CD8-positive, alpha-beta T cell (primary cell): ENCODE measurements at regions of chr6 and their contacts with region 1.

Region 1: DNA sequence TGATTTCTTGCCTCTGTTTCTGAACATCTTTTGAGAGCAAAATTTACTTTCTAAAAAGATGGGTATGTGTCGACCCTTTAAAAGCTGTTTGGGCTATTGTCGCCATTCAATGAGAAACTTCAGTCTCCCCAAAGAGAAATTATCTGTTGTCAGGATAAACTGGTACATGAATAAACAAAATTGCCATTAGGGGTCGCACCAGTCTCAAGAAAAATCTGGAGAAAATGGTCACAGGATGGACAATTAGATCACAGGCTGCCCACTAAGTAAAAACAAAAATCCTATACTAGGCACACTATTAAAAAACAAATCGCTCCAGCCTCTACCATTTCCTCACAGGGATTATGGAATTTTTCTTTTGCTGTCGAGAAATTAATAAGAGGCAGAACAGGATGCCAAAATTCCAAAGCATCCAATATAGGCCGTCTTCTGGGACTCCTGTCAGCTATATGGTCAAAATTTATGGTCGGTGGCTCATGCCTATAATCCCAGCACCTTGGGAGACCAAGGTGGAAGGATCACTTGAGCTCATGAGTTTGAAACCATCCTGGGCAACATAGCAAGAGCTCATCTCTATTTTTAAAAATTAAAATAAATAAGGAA is 5.5 kb upstream of the HLA-E start:
- DNase-seq: peak in 3 of 9 experiments; percentile 45 to 76 (median 68)
- ATAC-seq: no peak
- H3K4me3 ChIP-seq: no peak overlapping the region
- H3K4me3 Mint-ChIP-seq: no peak overlapping the region
- H3K27ac ChIP-seq: no peak overlapping the region
- H3K27ac Mint-ChIP-seq: no peak overlapping the region
- H3K4me1 ChIP-seq: peaks cover 21% of the 10 kb centered on the region
- H3K4me1 Mint-ChIP-seq: peaks cover 34% of the 10 kb centered on the region
- H3K27me3 ChIP-seq: peaks cover 10 to 19% of the 10 kb centered on the region in 2 experiments
- H3K27me3 Mint-ChIP-seq: peaks cover 27% of the 10 kb centered on the region
- CTCF ChIP-seq: peak; percentile 91

Region 2: DNA sequence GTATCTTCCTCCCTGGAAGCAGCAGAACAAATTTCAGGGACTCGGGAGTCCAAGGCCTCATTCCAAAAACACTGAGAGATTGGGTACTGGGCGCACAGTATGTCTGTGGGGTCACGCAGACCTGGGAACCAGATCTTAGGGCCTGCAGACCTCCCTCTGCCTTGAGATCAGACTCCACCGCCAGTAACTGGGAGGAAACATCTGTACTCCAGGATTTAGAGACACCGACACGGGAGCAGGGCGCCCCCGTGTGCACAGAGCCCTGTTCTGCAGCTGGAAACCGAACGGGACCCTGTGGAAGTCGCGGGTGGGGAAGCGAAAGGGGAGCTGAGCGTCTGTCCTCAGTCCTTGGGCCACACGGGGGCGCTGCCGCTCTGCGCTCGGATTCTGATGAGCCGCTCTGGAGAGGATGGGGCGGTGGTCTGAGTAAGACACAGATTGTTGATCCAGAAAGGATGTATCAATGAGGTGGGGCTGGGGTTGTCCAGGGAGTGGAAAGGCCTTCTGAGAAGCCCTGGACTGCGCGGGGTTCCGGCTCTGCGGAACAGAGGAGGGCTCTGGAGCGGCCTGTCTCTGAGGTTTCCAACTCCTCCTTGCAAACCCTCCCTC is 30.2 kb before region 1 on chr6:
- CTCF ChIA-PET with region 1: interaction called, 71 read pairs
- POLR2A ChIA-PET with region 1: interaction called, 4 read pairs
- intact Hi-C with region 1: loop called (anchors 1 to 2 kb)
- DNase-seq: peak; percentile 71 to 93 (median 87)
- ATAC-seq: peak; percentile 83
- H3K4me3 ChIP-seq: peak overlapping the region in 1 of 2 experiments; percentile 41
- H3K4me3 Mint-ChIP-seq: peak overlapping the region; percentile 49
- H3K27ac ChIP-seq: no peak overlapping the region
- H3K27ac Mint-ChIP-seq: no peak overlapping the region
- H3K4me1 ChIP-seq: peaks cover 42% of the 10 kb centered on the region
- H3K4me1 Mint-ChIP-seq: peaks cover 41% of the 10 kb centered on the region
- H3K27me3 ChIP-seq: peaks cover 38 to 64% of the 10 kb centered on the region in 2 experiments
- H3K27me3 Mint-ChIP-seq: peaks cover 68% of the 10 kb centered on the region
- CTCF ChIP-seq: peak; percentile 63

Region 3: DNA sequence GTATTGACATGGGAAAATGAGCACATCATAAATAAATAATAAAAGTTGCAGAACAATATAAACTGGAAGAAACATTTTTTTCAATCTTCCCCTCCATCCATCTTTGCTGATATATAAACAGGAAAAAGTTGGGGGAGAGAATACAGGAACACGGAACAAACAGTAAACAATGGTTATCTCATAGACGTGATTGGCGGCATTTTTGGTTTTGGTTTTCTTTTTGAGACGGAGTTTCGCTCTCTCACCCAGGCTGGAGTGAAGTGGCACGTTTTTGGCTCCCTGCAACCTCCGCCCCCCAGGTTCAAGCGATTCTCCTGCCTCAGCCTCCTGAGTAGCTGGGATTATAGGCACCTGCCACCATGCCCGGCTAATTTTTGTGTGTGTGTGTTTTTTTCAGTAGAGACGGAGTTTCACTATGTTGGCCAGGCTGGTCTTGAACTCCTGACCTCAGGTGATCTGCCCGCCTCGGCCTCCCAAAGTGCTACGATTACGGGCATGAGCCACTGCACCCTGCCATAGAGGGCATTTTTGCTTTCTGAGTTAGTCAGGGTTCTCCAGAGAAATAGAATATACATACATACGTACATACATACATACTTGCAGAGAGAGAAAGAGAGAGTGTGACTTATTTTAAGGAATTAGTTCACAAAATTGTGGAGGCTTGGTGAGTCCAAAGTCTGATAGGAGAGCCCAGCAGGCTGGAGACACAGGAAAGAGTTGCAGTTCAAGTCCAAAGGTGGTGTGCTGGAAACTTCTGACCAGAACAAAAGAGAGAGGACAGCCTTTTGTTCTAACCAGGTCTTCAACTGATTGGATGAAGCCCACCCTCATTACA is 49.9 kb after region 1 on chr6:
- CTCF ChIA-PET with region 1: interaction called, 437 read pairs
- POLR2A ChIA-PET with region 1: interaction called, 14 read pairs
- intact Hi-C with region 1: loop called (anchors 1 kb)
- DNase-seq: peak in 2 of 9 experiments; percentile 50 to 71
- ATAC-seq: no peak
- H3K4me3 ChIP-seq: peak overlapping the region in 1 of 2 experiments; percentile 28
- H3K4me3 Mint-ChIP-seq: peak overlapping the region; percentile 65
- H3K27ac ChIP-seq: peak overlapping the region in 1 of 2 experiments; percentile 44
- H3K27ac Mint-ChIP-seq: peak overlapping the region; percentile 57
- H3K4me1 ChIP-seq: peaks cover 15% of the 10 kb centered on the region
- H3K4me1 Mint-ChIP-seq: peaks cover 33% of the 10 kb centered on the region
- H3K27me3 ChIP-seq: no peaks in the 10 kb centered on the region
- H3K27me3 Mint-ChIP-seq: no peaks in the 10 kb centered on the region
- CTCF ChIP-seq: no peak

Region 4: GRCh38 chr6:30578051-30578450 is 94.3 kb after region 1 on chr6:
- CTCF ChIA-PET with region 1: interaction called, 12 read pairs
- POLR2A ChIA-PET with region 1: no interaction called
- intact Hi-C with region 1: no loop called
- DNase-seq: no peak
- ATAC-seq: no peak
- H3K4me3 ChIP-seq: no peak overlapping the region
- H3K4me3 Mint-ChIP-seq: no peak overlapping the region
- H3K27ac ChIP-seq: no peak overlapping the region
- H3K27ac Mint-ChIP-seq: no peak overlapping the region
- H3K4me1 ChIP-seq: peaks cover 26% of the 10 kb centered on the region
- H3K4me1 Mint-ChIP-seq: peaks cover 30% of the 10 kb centered on the region
- H3K27me3 ChIP-seq: no peaks in the 10 kb centered on the region
- H3K27me3 Mint-ChIP-seq: no peaks in the 10 kb centered on the region
- CTCF ChIP-seq: no peak

Region 5: DNA sequence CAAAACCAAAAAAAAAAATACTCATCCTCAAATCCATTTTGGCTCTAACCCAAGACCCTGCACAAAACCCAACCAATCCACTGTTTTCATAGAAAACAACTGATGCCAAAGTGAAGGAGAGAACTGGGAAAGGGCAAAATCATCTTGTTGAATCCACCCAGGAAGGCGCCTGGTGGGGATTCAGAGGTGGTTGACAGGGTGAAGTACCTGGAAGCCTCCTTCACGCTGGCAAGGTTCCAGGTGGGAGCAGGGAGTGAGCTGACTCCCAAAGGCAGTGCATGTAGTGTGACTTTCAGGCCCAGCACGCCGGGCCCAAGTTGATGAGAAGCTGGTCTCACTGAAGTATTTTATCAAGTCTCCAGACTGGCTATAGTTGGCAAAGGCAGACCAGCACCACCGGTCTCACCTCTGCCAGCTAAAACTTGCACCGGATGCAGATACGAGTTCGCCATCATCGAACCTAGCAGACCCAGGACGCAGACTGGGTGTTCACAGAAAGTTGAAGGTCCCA is 116.7 kb after region 1 on chr6:
- CTCF ChIA-PET with region 1: interaction called, 189 read pairs
- POLR2A ChIA-PET with region 1: interaction called, 7 read pairs
- intact Hi-C with region 1: loop called (anchors 1 kb)
- DNase-seq: no peak
- ATAC-seq: no peak
- H3K4me3 ChIP-seq: no peak overlapping the region
- H3K4me3 Mint-ChIP-seq: no peak overlapping the region
- H3K27ac ChIP-seq: peak overlapping the region in 1 of 2 experiments; percentile 67
- H3K27ac Mint-ChIP-seq: no peak overlapping the region
- H3K4me1 ChIP-seq: peaks cover 15% of the 10 kb centered on the region
- H3K4me1 Mint-ChIP-seq: peaks cover 22% of the 10 kb centered on the region
- H3K27me3 ChIP-seq: no peaks in the 10 kb centered on the region
- H3K27me3 Mint-ChIP-seq: no peaks in the 10 kb centered on the region
- CTCF ChIP-seq: no peak

Region 6: GRCh38 chr6:30678964-30679726 is 195.4 kb after region 1 on chr6:
- CTCF ChIA-PET with region 1: interaction called, 23 read pairs
- POLR2A ChIA-PET with region 1: interaction called, 5 read pairs
- intact Hi-C with region 1: loop called in 1 of 2 experiments (anchors 2 kb)
- DNase-seq: peak; percentile 88 to 98 (median 92)
- ATAC-seq: peak; percentile 32
- H3K4me3 ChIP-seq: peak overlapping the region; percentile 86 to 95
- H3K4me3 Mint-ChIP-seq: peak overlapping the region; percentile 99
- H3K27ac ChIP-seq: peak overlapping the region; percentile 21 to 85
- H3K27ac Mint-ChIP-seq: peak overlapping the region; percentile 99
- H3K4me1 ChIP-seq: peaks cover 27% of the 10 kb centered on the region
- H3K4me1 Mint-ChIP-seq: peaks cover 38% of the 10 kb centered on the region
- H3K27me3 ChIP-seq: no peaks in the 10 kb centered on the region
- H3K27me3 Mint-ChIP-seq: no peaks in the 10 kb centered on the region
- CTCF ChIP-seq: peak; percentile 92

Region 7: DNA sequence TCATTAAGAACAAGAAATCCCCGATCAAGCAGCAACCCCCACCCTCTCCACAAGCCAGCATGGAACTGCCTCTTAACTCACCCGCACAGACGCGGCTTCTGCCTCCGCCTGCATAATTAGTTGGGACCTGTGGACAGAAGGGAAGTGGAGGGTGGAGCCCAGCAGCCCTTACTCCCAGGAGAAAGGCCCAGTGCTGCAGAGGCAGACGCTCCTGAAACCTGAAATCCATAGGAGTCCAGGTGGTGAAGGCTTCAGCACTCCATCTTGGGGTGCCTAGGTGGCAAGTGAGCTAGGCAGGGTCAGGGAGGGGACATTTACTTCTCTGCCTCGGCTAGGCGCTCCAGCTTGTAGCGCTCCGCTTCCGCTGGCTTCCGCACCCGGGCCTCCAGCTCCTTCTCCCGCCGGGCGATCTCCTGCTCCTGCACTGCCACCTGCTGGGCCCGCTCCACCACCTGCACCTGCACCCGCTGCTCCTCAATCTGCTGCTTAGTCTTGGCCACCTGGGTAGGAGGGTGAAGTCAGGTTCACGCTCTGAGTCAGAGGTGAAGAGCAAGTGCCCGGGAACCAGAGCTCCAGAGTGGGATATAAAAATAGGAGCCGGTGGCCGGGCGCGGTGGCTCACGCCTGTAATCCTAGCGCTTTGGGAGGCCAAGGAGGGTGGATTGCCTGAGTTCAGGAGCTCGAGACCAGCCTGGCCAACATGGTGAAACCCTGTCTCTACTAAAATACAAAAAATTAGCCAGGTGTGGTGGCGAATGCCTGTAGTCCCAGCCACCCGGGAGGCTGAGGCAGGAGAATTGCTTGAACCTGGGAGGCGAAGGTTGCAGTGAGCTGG is 247.0 kb after region 1 on chr6:
- CTCF ChIA-PET with region 1: interaction called, 36 read pairs
- POLR2A ChIA-PET with region 1: no interaction called
- intact Hi-C with region 1: no loop called
- DNase-seq: peak; percentile 67 to 91 (median 85)
- ATAC-seq: peak; percentile 98
- H3K4me3 ChIP-seq: peak overlapping the region in 1 of 2 experiments; percentile 21
- H3K4me3 Mint-ChIP-seq: peak overlapping the region; percentile 47
- H3K27ac ChIP-seq: no peak overlapping the region
- H3K27ac Mint-ChIP-seq: no peak overlapping the region
- H3K4me1 ChIP-seq: peaks cover 29% of the 10 kb centered on the region
- H3K4me1 Mint-ChIP-seq: peaks cover 37% of the 10 kb centered on the region
- H3K27me3 ChIP-seq: no peaks in the 10 kb centered on the region
- H3K27me3 Mint-ChIP-seq: no peaks in the 10 kb centered on the region
- CTCF ChIP-seq: peak; percentile 67